Naive thymus-derived CD8-positive, alpha-beta T cell (primary cell): ENCODE measurements at regions of chr2 and their contacts with region 1.

Region 1: GRCh38 chr2:196160101-196160500 is 11.3 kb downstream of the STK17B start:
- DNase-seq: peak in 9 of 10 donors; percentile 60 to 92 (median 84)
- ATAC-seq: peak; percentile 44 to 65
- H3K4me3 Mint-ChIP-seq: peak overlapping the region; percentile 63 to 96 (median 84)
- H3K27ac Mint-ChIP-seq: peak overlapping the region; percentile 89 to 100 (median 97)
- H3K4me1 Mint-ChIP-seq: peaks cover 13 to 90% (median 62%) of the 10 kb centered on the region in 4 donors
- H3K27me3 Mint-ChIP-seq: no peaks in the 10 kb centered on the region

Region 2: GRCh38 chr2:196076778-196077568 is 83.1 kb before region 1 on chr2:
- POLR2A ChIA-PET with region 1: interaction called, 11 read pairs
- DNase-seq: no peak
- ATAC-seq: no peak
- H3K4me3 Mint-ChIP-seq: no peak overlapping the region
- H3K27ac Mint-ChIP-seq: no peak overlapping the region
- H3K4me1 Mint-ChIP-seq: peaks cover 8 to 31% (median 22%) of the 10 kb centered on the region in 4 donors
- H3K27me3 Mint-ChIP-seq: no peaks in the 10 kb centered on the region

Region 3: GRCh38 chr2:196143730-196144131 is 16.4 kb before region 1 on chr2:
- POLR2A ChIA-PET with region 1: interaction called, 70 read pairs
- DNase-seq: peak in 2 of 10 donors; percentile 4 to 15
- ATAC-seq: peak in 1 of 2 donors; percentile 20
- H3K4me3 Mint-ChIP-seq: peak overlapping the region in 9 of 10 donors; percentile 20 to 77 (median 72)
- H3K27ac Mint-ChIP-seq: peak overlapping the region; percentile 74 to 95 (median 90)
- H3K4me1 Mint-ChIP-seq: peaks cover 24 to 89% (median 73%) of the 10 kb centered on the region in 4 donors
- H3K27me3 Mint-ChIP-seq: no peaks in the 10 kb centered on the region

Region 4: GRCh38 chr2:196149948-196150347 is 10.2 kb before region 1 on chr2:
- POLR2A ChIA-PET with region 1: interaction called, 70 read pairs
- DNase-seq: no peak
- ATAC-seq: peak; percentile 47 to 51
- H3K4me3 Mint-ChIP-seq: peak overlapping the region; percentile 40 to 82 (median 74)
- H3K27ac Mint-ChIP-seq: peak overlapping the region; percentile 88 to 95 (median 93)
- H3K4me1 Mint-ChIP-seq: peaks cover 32 to 96% (median 85%) of the 10 kb centered on the region in 4 donors
- H3K27me3 Mint-ChIP-seq: no peaks in the 10 kb centered on the region